Heart left ventricle (tissue), 16 donors: ENCODE measurements at regions of chr17 and their contacts with region 1.

Region 1: DNA sequence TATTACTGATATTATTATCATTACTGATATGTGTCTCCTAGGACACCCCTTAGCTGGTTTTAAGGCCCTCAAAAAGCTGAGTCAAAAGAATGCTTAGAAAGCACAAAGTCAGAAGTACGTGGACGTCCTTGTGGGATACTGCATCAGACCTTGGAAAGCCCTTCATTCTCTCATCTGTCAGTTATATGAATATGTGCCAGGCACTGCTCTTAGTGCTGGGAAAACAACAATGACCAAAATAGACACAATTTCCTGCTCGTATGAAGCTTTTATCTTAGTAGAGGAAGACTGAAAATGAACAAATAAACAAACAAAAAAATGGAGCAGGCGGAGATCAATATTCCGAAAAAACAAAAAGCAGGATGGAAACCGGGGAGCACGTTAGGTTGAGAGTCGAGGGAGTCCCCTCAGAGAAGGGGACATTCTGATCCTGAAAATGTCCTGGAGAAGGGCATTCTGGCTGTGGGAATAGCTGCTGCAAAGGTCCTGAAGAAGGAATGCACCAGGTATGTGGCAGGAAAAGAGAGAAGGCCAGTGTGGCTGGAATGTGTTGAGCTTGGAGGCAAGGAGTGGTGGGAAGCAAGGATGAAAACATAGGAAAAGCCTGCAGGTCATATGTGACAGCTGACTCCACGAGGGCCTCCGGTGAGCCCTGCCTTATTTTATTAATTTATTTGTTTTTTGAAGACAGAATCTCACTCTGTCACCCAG is 15.5 kb upstream of the TMEM94 start:
- DNase-seq: no peak
- ATAC-seq: peak; percentile 42 to 73 (median 58)
- H3K4me3 ChIP-seq: no peak overlapping the region
- H3K27ac ChIP-seq: peak overlapping the region in 11 of 12 donors; percentile 37 to 77 (median 60)
- H3K4me1 ChIP-seq: peaks cover 5 to 44% (median 23%) of the 10 kb centered on the region in 12 donors
- H3K27me3 ChIP-seq: no peaks in the 10 kb centered on the region
- CTCF ChIP-seq: no peak
- POLR2A ChIP-seq: no peak

Region 2: GRCh38 chr17:75476271-75476671 is 35.4 kb after region 1 on chr17:
- intact Hi-C with region 1: loop called in 1 of 10 experiments (anchors 5 kb)
- DNase-seq: peak in 2 of 5 donors; percentile 70 to 73
- ATAC-seq: peak; percentile 76 to 80 (median 78)
- H3K4me3 ChIP-seq: peak overlapping the region in 8 of 12 donors; percentile 16 to 48 (median 32)
- H3K27ac ChIP-seq: peak overlapping the region; percentile 59 to 94 (median 82)
- H3K4me1 ChIP-seq: peaks cover 17 to 70% (median 43%) of the 10 kb centered on the region in 12 donors
- H3K27me3 ChIP-seq: no peaks in the 10 kb centered on the region
- CTCF ChIP-seq: no peak
- POLR2A ChIP-seq: no peak